Activated T-helper 1 cell treated with anti-CD3 and anti-CD28 coated beads, Interleukin-12 subunit alpha, Interleukin-12 subunit beta, Interleukin-2, Interleukin-4 antibody, amounts not matched to agents 30 ng/mL and 10 ng/mL and 1 ng/mL, durations not matched to agents 14 hours and 24 hours and 36 hours (primary cell): ENCODE measurements at regions of chr7 and their contacts with region 1.

Region 1: GRCh38 chr7:135335628-135336139 is 102.0 kb downstream of the STRA8 start:
- DNase-seq: peak; percentile 1
- H3K4me3 Mint-ChIP-seq: no peak overlapping the region
- H3K27ac Mint-ChIP-seq: no peak overlapping the region
- H3K4me1 Mint-ChIP-seq: no peaks in the 10 kb centered on the region
- H3K27me3 Mint-ChIP-seq: peaks cover 2% of the 10 kb centered on the region

Region 2: DNA sequence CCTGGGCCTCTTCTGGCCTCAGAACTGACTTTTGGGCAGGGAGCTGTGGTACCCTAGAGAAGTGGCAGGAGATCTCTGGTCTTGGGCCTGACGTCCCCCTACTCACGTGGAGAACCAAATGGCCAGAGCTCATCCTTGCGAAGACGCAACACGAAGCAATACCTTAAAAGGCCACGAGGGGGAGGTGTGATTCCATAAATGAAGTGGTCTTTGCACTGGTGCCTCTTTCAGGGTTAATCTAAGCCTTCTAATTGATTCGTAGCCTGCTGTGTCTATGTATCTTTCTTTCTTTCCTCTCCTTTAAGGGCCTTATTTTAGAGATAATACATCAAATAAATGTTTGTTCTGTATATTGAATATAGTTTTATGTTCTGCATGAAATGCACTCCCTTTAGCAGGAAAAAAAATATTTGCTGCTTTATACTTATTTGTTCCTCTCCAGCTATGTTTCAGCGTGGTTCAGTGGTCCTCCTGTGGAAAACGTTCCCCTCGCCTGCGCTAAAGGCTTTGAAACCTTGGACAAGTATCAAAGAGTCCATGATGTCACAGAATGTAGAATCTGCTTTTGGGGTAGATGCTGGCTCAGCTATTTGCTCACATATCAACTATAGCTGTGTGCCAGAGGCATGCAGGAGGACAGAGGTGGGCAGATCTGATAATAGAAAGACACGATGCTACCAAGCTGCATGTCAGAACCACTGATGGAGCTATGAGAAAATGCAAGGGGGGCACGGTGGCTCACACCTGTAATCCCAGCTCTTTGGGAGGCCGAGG is 61.0 kb before region 1 on chr7:
- intact Hi-C with region 1: loop called (anchors 1 kb)
- DNase-seq: peak; percentile 57
- H3K4me3 Mint-ChIP-seq: no peak overlapping the region
- H3K27ac Mint-ChIP-seq: no peak overlapping the region
- H3K4me1 Mint-ChIP-seq: no peaks in the 10 kb centered on the region
- H3K27me3 Mint-ChIP-seq: peaks cover 2% of the 10 kb centered on the region